ENCODE measurements at regions of chr1 and their contacts with region 1.

Region 1: DNA sequence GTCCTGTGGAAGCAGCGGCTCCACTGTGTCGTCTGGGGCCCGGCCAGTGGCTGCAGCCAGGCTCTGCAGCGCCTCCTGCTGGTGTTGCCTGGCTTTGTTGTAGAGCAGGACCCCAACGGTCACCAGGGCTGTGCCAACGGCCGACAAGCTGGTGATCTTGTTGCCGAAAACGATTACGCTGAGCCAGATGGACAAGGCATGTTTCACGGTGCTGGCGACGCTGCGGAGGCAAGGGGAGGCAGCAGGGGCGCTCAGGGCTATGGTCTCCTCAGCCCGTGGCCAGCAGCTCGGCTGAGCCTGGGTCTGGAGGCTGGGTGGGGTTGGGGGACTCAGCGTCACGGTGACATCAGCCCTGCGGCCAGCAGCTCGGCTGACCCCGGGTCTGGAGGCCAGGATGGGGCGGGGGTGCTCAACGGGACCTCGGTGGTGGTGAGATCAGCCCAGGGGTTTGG is 7.0 kb upstream of the CDK11B start:
- DNase-seq: no peak
- ATAC-seq: no peak

Region 2: GRCh38 chr1:1451696-1452367 is 214.0 kb before region 1 on chr1:
- intact Hi-C with region 1: no loop called
- DNase-seq: no peak
- ATAC-seq: no peak

Region 3: GRCh38 chr1:1489231-1489630 is 176.6 kb before region 1 on chr1:
- intact Hi-C with region 1: no loop called
- DNase-seq: no peak
- ATAC-seq: no peak

Region 4: GRCh38 chr1:1615256-1616044 is 50.4 kb before region 1 on chr1 and contains the start of gene MIB2:
- intact Hi-C with region 1: loop called (anchors 5 kb)
- DNase-seq: peak; percentile 97
- ATAC-seq: peak; percentile 96
- total RNA-seq, gene MIB2: 110 TPM

Measured in Right ventricle myocardium superior (tissue), 1 donor.